CD4-positive, alpha-beta T cell (primary cell): ENCODE measurements at regions of chr2 and their contacts with region 1.

Region 1: DNA sequence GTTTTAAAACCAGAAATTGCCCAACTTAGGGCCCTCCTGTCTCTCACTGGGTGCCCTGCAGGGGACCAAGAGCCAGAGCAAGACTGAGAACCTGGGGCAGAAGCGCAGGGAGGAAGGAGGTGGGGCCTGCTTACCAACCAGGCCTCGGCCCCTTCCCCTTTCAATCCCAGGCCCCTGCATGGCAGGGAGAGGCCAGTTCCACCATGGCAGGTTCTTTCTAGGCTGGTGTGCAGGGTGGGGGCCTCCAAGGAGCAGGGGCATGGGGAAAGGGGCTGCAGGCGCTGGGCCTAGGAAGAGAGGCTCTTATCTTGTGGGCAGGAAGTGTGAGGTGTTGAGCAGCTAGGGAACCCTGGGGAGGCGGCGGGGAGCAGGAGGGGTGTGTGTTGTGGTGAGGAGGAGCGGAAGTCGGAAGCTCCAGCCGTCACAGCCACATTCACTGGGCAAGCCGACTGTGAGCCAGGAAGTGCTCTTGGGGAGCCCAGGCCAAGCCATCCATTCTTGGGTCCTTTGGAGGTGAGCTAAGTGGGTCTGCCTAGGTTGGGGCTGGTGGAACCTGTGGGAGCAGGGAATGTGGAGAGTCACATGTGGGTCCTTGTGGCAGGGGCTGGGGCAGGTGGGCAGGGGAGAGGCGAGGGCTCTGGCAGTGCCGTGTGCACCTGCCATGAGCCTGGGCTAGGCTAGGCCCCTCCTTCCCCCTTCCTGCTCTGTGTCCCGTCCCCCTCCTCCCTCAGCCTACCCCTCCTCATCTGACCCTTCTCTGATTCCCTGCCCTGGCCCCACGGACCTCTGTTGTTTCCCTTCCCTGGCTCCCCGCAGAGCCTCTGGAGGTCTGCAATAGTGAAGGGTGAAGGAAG is at the start of gene PSD4:
- DNase-seq: peak; percentile 72 to 95 (median 85)
- ATAC-seq: peak; percentile 82
- H3K4me3 ChIP-seq: peak within 1 kb of the TSS; percentile 86
- H3K4me3 Mint-ChIP-seq: peak within 1 kb of the TSS; percentile 92
- H3K27ac ChIP-seq: peak within 1 kb of the TSS; percentile 62 to 88
- H3K27ac Mint-ChIP-seq: peak within 1 kb of the TSS; percentile 93
- H3K4me1 ChIP-seq: peaks cover 99% of the 10 kb centered on the region
- H3K4me1 Mint-ChIP-seq: peaks cover 76% of the 10 kb centered on the region
- H3K27me3 ChIP-seq: no peaks in the 10 kb centered on the region
- H3K27me3 Mint-ChIP-seq: peaks cover 5% of the 10 kb centered on the region
- CTCF ChIP-seq: no peak
- total RNA-seq, gene PSD4: 96.5 to 101 TPM

Region 2: GRCh38 chr2:112996635-112997034 is 177.1 kb before region 1 on chr2:
- CTCF ChIA-PET with region 1: no interaction called
- POLR2A ChIA-PET with region 1: interaction called, 8 read pairs
- intact Hi-C with region 1: loop called in 1 of 2 experiments (anchors 5 kb)
- DNase-seq: peak; percentile 61 to 93 (median 72)
- ATAC-seq: peak; percentile 96
- H3K4me3 ChIP-seq: no peak overlapping the region
- H3K4me3 Mint-ChIP-seq: peak overlapping the region; percentile 64
- H3K27ac ChIP-seq: peak overlapping the region; percentile 42 to 71
- H3K27ac Mint-ChIP-seq: peak overlapping the region; percentile 91
- H3K4me1 ChIP-seq: peaks cover 27% of the 10 kb centered on the region
- H3K4me1 Mint-ChIP-seq: peaks cover 54% of the 10 kb centered on the region
- H3K27me3 ChIP-seq: no peaks in the 10 kb centered on the region
- H3K27me3 Mint-ChIP-seq: no peaks in the 10 kb centered on the region
- CTCF ChIP-seq: no peak

Region 3: DNA sequence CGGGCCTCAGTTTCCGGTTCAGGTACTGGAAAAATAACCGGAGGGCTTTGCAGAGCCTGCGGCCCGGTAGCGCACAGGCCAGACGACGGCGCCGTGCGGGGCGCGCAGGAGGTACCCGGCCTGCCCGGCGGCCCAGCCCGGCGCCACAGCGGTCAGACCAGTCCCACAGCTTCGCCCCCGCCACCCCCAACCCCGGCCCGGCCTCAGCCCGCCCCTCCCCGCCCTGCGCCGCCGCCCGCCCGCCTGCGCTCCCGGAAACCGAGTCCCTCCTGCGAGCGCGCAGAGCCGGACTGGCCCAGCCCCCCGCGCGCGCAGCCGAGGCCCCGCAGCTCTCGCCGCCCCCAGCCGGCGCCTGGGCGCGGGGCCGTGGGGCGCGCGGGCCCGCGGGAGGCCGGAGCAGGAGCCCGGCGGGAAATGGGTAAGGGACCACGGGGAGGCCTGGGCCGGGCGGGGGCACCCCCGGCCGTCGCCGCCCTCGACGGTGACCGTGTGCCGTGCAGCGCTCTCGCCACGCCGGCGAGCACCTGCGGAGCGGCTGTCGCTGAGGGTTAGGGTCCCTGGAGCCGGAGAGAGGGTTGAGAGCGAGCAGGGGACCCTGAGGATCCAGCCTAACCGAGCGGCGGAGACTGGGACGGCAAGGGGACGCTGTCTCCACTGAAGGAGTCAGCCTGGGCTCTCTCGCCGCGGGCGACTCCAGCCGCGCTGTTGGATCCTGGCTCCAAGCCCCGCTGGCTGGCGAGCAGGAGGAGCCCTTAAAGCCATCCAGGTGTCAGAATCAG is 16.5 kb before region 1 on chr2:
- CTCF ChIA-PET with region 1: interaction called, 6 read pairs
- POLR2A ChIA-PET with region 1: interaction called, 91 read pairs
- intact Hi-C with region 1: loop called in 1 of 2 experiments (anchors 2 kb)
- DNase-seq: peak in 9 of 14 experiments; percentile 33 to 71 (median 55)
- ATAC-seq: peak; percentile 86
- H3K4me3 ChIP-seq: peak overlapping the region; percentile 79
- H3K4me3 Mint-ChIP-seq: peak overlapping the region; percentile 96
- H3K27ac ChIP-seq: peak overlapping the region in 1 of 2 donors; percentile 11
- H3K27ac Mint-ChIP-seq: peak overlapping the region; percentile 92
- H3K4me1 ChIP-seq: peaks cover 19% of the 10 kb centered on the region
- H3K4me1 Mint-ChIP-seq: peaks cover 41% of the 10 kb centered on the region
- H3K27me3 ChIP-seq: no peaks in the 10 kb centered on the region
- H3K27me3 Mint-ChIP-seq: no peaks in the 10 kb centered on the region
- CTCF ChIP-seq: no peak

Region 4: GRCh38 chr2:113198790-113199612 is 25.2 kb after region 1 on chr2:
- CTCF ChIA-PET with region 1: interaction called, 12 read pairs
- POLR2A ChIA-PET with region 1: interaction called, 38 read pairs
- intact Hi-C with region 1: loop called in 1 of 2 experiments (anchors 2 kb)
- DNase-seq: peak; percentile 53 to 87 (median 75)
- ATAC-seq: peak; percentile 71
- H3K4me3 ChIP-seq: no peak overlapping the region
- H3K4me3 Mint-ChIP-seq: no peak overlapping the region
- H3K27ac ChIP-seq: peak overlapping the region in 1 of 2 donors; percentile 5
- H3K27ac Mint-ChIP-seq: peak overlapping the region; percentile 12
- H3K4me1 ChIP-seq: peaks cover 9% of the 10 kb centered on the region
- H3K4me1 Mint-ChIP-seq: peaks cover 8% of the 10 kb centered on the region
- H3K27me3 ChIP-seq: no peaks in the 10 kb centered on the region
- H3K27me3 Mint-ChIP-seq: no peaks in the 10 kb centered on the region
- CTCF ChIP-seq: peak; percentile 91

Region 5: DNA sequence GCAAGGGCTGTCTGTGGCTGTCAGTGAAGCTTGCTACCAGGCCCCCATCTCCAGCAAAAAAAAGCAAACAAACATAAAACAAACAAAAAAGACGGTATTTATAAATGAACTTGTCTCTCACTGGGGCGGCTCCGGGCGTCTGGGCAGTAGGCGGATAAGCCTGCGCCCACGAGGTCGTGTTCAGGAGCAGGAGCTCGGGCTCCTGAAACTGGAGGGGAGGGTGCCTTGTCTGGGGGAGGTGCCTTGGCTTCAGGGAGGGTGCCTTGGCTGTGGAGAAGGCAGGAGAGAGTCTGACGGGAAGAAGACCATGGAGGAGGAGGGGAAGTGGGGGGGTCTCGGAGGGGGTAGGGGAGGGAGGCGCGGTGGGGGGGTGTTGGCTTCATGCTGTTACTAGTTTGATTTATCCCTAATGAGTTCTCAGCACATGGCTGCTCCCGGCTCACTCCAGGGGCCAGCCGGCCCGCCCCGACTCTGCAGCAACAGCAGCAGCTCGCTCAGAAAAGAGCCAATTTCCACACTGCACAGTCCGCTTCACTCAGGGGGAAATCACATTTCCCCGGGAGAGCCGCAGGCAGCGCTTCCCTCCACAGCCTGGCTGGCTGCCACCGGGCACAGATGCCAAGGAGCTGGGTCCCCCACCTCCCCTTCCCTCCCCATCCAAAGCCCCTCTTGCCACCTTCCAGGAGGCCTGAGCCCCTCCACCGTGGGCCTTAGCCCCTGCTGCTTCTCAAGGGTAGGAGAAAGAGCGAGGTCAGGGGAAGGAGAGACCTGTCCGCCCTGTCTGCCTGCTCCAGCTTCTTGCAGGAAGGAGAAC is 38.7 kb after region 1 on chr2:
- CTCF ChIA-PET with region 1: no interaction called
- POLR2A ChIA-PET with region 1: no interaction called
- intact Hi-C with region 1: no loop called
- DNase-seq: no peak
- ATAC-seq: no peak
- H3K4me3 ChIP-seq: no peak overlapping the region
- H3K4me3 Mint-ChIP-seq: no peak overlapping the region
- H3K27ac ChIP-seq: no peak overlapping the region
- H3K27ac Mint-ChIP-seq: no peak overlapping the region
- H3K4me1 ChIP-seq: peaks cover 3% of the 10 kb centered on the region
- H3K4me1 Mint-ChIP-seq: peaks cover 18% of the 10 kb centered on the region
- H3K27me3 ChIP-seq: no peaks in the 10 kb centered on the region
- H3K27me3 Mint-ChIP-seq: no peaks in the 10 kb centered on the region
- CTCF ChIP-seq: no peak

Region 6: DNA sequence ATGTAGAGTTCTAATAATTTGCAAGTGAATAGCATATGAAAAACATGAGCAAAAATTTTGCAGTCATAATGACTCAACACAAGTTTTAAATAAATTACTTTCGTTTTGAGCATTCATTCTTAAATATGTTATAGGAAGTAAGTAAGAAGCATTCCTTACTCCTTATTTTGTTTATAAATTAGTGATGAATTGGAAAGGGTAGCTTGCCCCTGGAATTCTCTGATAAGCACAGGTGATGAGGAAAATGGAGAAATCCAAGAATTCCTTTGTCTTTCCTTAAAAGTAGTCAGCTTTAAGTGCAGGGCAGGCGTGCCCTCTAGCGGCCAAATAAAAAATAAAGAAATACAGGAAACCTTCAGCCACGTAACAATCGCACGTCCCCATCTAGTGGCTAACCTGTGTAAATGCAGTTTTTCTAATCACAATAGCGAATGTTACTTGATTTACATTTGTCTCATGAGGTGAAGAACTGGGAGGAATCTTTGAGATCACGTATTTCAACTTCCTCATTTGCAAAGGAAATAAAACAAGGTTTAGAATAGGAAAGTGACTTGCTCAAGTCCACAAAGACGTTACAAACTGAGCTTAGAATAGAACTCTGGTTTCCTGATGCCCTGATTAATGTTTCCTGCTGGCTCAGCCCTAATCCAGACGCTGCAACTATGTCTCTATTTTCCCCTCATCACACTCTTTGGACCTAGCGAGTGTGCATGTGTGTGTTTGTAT is 216.5 kb after region 1 on chr2:
- CTCF ChIA-PET with region 1: interaction called, 16 read pairs
- POLR2A ChIA-PET with region 1: interaction called, 6 read pairs
- intact Hi-C with region 1: no loop called
- DNase-seq: peak; percentile 11 to 88 (median 43)
- ATAC-seq: peak; percentile 97
- H3K4me3 ChIP-seq: peak overlapping the region; percentile 51
- H3K4me3 Mint-ChIP-seq: peak overlapping the region; percentile 83
- H3K27ac ChIP-seq: no peak overlapping the region
- H3K27ac Mint-ChIP-seq: peak overlapping the region; percentile 68
- H3K4me1 ChIP-seq: peaks cover 4% of the 10 kb centered on the region
- H3K4me1 Mint-ChIP-seq: peaks cover 10% of the 10 kb centered on the region
- H3K27me3 ChIP-seq: no peaks in the 10 kb centered on the region
- H3K27me3 Mint-ChIP-seq: no peaks in the 10 kb centered on the region
- CTCF ChIP-seq: peak; percentile 100